ENCODE measurements at regions of chr21 and their contacts with region 1.

Region 1: GRCh38 chr21:34722684-34723300 is 54.0 kb downstream of the CLIC6 start:
- DNase-seq: peak in 1 of 2 experiments; percentile 78
- H3K4me3 ChIP-seq: no peak overlapping the region
- H3K27ac ChIP-seq: no peak overlapping the region
- H3K4me1 ChIP-seq: no peaks in the 10 kb centered on the region
- H3K27me3 ChIP-seq: no peaks in the 10 kb centered on the region
- CTCF ChIP-seq: peak; percentile 66 to 93 (median 91)
- EP300 ChIP-seq: no peak
- POLR2A ChIP-seq: no peak
- RAD21 ChIP-seq: peak; percentile 61 to 70

Region 2: GRCh38 chr21:34693192-34693810 is 29.5 kb before region 1 on chr21:
- CTCF ChIA-PET with region 1: interaction called, 16 read pairs
- POLR2A ChIA-PET with region 1: no interaction called
- DNase-seq: peak in 1 of 2 experiments; percentile 55
- H3K4me3 ChIP-seq: no peak overlapping the region
- H3K27ac ChIP-seq: no peak overlapping the region
- H3K4me1 ChIP-seq: peaks cover 0 to 10% (median 4%) of the 10 kb centered on the region in 4 experiments; a peak in 4 of 7 replicates
- H3K27me3 ChIP-seq: no peaks in the 10 kb centered on the region; a peak in 2 of 7 replicates
- CTCF ChIP-seq: peak in 2 of 3 experiments; percentile 69 to 85; a peak in 3 of 4 replicates
- EP300 ChIP-seq: no peak
- POLR2A ChIP-seq: no peak
- RAD21 ChIP-seq: peak; percentile 76 to 78

Region 3: DNA sequence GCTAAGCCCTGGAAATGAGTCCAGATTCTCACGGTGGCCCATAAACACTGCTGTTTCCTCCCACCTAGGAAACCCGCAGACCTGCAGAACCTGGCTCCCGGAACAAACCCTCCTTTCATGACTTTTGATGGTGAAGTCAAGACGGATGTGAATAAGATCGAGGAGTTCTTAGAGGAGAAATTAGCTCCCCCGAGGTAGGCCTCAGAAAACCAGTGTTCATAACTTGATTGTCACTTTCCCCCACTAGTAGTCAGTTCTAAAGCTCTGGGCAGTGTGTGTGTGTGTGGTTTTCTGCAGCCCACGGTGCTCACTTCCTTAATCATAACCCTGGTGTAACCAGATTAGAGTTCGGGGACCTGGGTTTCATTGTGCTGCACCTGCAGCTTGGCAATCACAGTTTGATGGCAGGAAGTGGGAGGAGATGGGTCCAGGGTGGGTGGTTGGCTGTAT is 14.9 kb before region 1 on chr21:
- CTCF ChIA-PET with region 1: interaction called, 54 read pairs
- POLR2A ChIA-PET with region 1: no interaction called
- DNase-seq: no peak
- H3K4me3 ChIP-seq: no peak overlapping the region
- H3K27ac ChIP-seq: no peak overlapping the region
- H3K4me1 ChIP-seq: no peaks in the 10 kb centered on the region; a peak in 1 of 7 replicates
- H3K27me3 ChIP-seq: no peaks in the 10 kb centered on the region
- CTCF ChIP-seq: no peak
- EP300 ChIP-seq: no peak
- POLR2A ChIP-seq: no peak
- RAD21 ChIP-seq: no peak

Region 4: DNA sequence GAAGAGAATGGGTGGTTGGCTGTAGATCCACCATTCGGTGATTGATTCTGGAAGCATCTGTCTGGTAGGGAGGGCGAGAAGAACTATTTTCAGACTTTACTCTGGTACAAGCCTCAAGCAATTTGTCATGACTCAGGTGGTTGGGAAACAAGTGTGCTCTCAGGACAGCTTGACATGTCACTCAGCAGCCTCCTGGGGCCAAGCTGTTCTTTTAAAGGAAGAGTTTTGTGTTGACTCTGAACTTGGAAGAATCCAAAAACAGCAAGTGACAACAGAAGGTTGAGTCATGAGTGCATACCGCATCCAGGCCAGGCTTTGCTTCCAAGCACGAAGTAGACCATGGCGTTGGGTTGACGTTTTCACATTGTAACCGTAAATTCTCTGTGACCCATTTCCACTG is 11.9 kb after region 1 on chr21:
- CTCF ChIA-PET with region 1: interaction called, 23 read pairs
- POLR2A ChIA-PET with region 1: interaction called, 3 read pairs
- DNase-seq: no peak
- H3K4me3 ChIP-seq: no peak overlapping the region
- H3K27ac ChIP-seq: no peak overlapping the region
- H3K4me1 ChIP-seq: no peaks in the 10 kb centered on the region
- H3K27me3 ChIP-seq: no peaks in the 10 kb centered on the region
- CTCF ChIP-seq: no peak
- EP300 ChIP-seq: no peak
- POLR2A ChIP-seq: no peak
- RAD21 ChIP-seq: no peak

Region 5: DNA sequence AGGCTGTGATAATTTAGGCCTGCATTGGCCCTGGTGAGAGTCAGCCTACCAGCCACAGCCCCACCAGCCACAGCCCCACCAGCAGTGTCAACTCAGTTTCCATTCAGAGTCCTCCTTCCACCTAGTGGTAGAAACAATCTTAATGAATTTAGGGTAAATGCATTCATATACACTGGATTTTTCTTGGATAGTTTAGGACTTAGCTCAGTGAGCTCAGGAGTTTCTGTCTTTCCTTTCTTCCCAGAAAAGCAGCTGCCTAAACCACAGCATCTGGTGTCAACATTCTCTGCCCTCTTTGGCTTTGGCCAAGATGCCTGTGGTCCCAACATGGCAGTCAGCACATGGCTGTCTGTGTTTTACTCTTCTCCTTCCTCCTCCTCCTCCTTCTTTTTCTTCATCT is 40.0 kb after region 1 on chr21:
- CTCF ChIA-PET with region 1: interaction called, 10 read pairs
- POLR2A ChIA-PET with region 1: no interaction called
- DNase-seq: no peak
- H3K4me3 ChIP-seq: no peak overlapping the region
- H3K27ac ChIP-seq: no peak overlapping the region
- H3K4me1 ChIP-seq: no peaks in the 10 kb centered on the region
- H3K27me3 ChIP-seq: no peaks in the 10 kb centered on the region
- CTCF ChIP-seq: peak in 1 of 3 experiments; percentile 9; a peak in 1 of 4 replicates
- EP300 ChIP-seq: no peak
- POLR2A ChIP-seq: no peak
- RAD21 ChIP-seq: no peak

Region 6: DNA sequence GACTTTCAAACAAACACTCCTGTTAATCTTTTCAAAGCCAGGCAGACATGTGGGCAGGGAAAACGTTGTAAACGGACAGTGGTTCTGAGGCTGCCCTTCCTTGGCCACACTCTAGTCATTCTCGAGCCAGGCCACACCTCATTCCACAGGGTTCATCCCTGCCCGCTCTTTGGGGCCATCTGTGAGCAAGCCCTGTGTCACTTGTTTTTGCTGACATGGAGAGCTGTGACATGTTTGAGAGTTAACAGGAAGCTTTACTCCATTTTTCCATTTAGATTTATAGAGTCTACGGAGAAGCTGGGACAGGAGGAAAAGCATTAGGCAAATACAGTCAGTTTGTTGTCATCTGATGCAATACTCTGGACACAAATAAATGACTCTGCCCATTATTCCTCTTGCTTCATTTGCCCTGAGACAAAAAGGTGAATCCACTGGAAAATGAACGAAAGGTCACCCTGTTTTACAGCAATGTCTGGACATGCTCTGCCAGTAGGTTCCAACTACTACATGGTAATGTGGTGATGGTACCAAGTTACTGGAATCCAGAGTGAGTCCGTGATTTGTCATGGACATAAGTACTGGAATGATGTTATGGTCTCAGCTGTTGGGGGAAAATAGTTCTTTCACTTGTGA is 72.9 kb after region 1 on chr21:
- CTCF ChIA-PET with region 1: interaction called, 10 read pairs
- POLR2A ChIA-PET with region 1: no interaction called
- DNase-seq: no peak
- H3K4me3 ChIP-seq: no peak overlapping the region
- H3K27ac ChIP-seq: no peak overlapping the region
- H3K4me1 ChIP-seq: peaks cover 0 to 3% (median under 1%) of the 10 kb centered on the region in 4 experiments; a peak in 3 of 7 replicates
- H3K27me3 ChIP-seq: no peaks in the 10 kb centered on the region
- CTCF ChIP-seq: no peak
- EP300 ChIP-seq: no peak
- POLR2A ChIP-seq: no peak
- RAD21 ChIP-seq: no peak

Measured in H1 (cell line).